Caco-2 (cell line): ENCODE measurements at regions of chr7 and their contacts with region 1.

Region 1: DNA sequence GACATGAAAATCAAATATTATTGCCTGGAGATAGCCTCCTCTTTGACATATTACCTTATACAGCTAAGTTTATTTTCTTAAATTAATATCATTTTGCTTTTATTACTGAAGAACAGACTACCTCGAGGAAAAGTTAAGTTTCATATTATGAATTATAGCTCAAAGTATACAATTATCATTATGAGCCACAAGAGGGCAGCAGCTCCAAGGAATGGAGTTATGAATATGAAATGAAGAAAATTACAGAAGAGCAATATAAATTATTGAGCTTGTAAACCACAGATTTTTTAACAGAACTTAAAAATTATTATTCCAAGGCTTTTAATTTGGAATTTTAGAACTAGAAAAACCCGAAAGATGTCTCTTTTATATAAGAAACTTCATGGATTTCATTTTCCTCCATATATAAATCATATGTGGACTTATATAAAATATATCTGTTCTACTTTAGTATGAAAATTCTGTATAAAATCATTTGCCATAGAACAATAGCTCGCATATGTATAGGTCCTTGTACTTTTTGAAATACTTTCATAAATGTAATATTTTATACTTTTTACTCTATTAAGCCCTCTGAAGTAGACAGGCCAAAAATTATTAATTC is 40.1 kb downstream of the IQUB start:
- DNase-seq: peak in 1 of 2 experiments; percentile 30
- H3K4me3 ChIP-seq: no peak overlapping the region
- H3K4me3 Mint-ChIP-seq: no peak overlapping the region
- H3K27ac Mint-ChIP-seq: no peak overlapping the region
- H3K4me1 ChIP-seq: no peaks in the 10 kb centered on the region
- H3K4me1 Mint-ChIP-seq: peaks cover 7% of the 10 kb centered on the region
- H3K27me3 ChIP-seq: no peaks in the 10 kb centered on the region
- H3K27me3 Mint-ChIP-seq: peaks cover 3% of the 10 kb centered on the region
- CTCF ChIP-seq: peak; percentile 50 to 56

Region 2: GRCh38 chr7:123534383-123535260 is 40.3 kb after region 1 on chr7 and contains the start of gene IQUB:
- CTCF ChIA-PET with region 1: interaction called, 28 read pairs
- POLR2A ChIA-PET with region 1: no interaction called
- intact Hi-C with region 1: loop called (anchors 1 kb)
- DNase-seq: peak; percentile 97 to 99
- H3K4me3 ChIP-seq: peak within 1 kb of the TSS; percentile 69
- H3K4me3 Mint-ChIP-seq: peak within 1 kb of the TSS; percentile 92
- H3K27ac Mint-ChIP-seq: peak within 1 kb of the TSS; percentile 81
- H3K4me1 ChIP-seq: no peaks in the 10 kb centered on the region
- H3K4me1 Mint-ChIP-seq: no peaks in the 10 kb centered on the region
- H3K27me3 ChIP-seq: no peaks in the 10 kb centered on the region
- H3K27me3 Mint-ChIP-seq: no peaks in the 10 kb centered on the region
- CTCF ChIP-seq: no peak
- total RNA-seq, gene IQUB: 0.35 and 0.39 TPM in 2 replicates

Region 3: GRCh38 chr7:123557398-123558288 is 63.3 kb after region 1 on chr7 and contains the start of gene NDUFA5:
- CTCF ChIA-PET with region 1: interaction called, 16 read pairs
- POLR2A ChIA-PET with region 1: interaction called, 5 read pairs
- intact Hi-C with region 1: no loop called
- DNase-seq: peak; percentile 99
- H3K4me3 ChIP-seq: peak within 1 kb of the TSS; percentile 58
- H3K4me3 Mint-ChIP-seq: no peak within 1 kb of the TSS
- H3K27ac Mint-ChIP-seq: no peak within 1 kb of the TSS
- H3K4me1 ChIP-seq: peaks cover 5% of the 10 kb centered on the region; the same call in 1 of the 2 replicates
- H3K4me1 Mint-ChIP-seq: no peaks in the 10 kb centered on the region
- H3K27me3 ChIP-seq: no peaks in the 10 kb centered on the region
- H3K27me3 Mint-ChIP-seq: peaks cover 3% of the 10 kb centered on the region
- CTCF ChIP-seq: no peak
- total RNA-seq, gene NDUFA5: 87.9 and 88.9 TPM in 2 replicates